ENCODE measurements at regions of chr7 and their contacts with region 1.

Region 1: DNA sequence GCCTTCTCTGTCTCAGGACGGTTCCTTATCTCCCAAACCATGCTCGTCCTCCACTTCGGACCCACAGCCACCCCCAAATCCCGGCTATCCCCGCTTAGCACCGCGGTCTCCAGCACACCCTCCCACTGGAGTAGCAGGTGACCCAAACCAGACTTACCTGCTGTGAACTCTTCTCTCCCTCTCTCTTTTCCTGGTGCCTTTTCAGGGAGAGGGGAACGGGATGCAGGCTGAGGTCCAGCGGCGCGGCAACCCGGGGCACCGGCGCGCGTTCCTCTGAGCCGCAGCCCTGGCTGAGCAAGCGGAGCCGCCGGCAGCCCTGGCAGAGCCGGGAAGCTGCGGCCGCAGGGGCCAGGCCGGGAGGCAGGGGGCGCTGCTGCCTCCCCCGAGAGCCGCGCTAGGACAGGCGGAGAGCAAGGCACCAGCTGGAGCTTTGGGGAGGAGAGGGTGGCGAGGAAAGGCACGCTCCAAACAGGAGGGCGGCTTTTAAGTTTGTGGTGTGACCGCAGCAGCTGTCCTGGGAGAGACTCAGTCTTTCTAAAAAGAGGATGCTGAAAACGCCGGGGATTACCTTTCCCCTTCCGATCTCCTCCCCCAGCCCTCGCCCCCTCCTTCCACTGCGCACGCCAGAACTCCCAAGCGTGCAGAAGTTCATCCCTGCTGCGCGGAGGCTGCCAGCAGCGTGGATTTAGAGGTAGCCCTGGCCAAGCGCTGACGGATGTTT is at the start of gene SEMA3D:
- DNase-seq: peak; percentile 77
- ATAC-seq: peak; percentile 94
- total RNA-seq, gene SEMA3D: 1.6 TPM

Region 2: DNA sequence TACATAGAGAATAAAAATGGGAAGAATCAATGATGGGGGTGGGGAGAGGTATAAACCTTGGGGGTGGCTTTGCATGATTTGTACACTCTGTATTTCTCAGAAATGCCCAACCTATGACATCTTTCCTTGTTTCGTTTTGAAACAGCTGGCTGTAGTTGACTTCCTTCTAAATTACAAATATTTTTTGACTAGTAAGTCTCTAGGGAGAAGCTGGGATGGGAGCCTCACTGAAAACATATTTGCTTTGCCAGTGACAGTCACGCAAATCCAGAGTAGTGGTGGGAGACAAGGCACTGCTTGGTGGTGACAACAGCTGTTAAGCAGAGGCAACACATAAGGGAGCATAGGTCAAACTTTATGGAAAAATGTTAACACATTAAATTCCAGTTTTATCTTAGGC is 440.3 kb before region 1 on chr7:
- intact Hi-C with region 1: no loop called
- DNase-seq: no peak
- ATAC-seq: peak; percentile 52

Region 3: DNA sequence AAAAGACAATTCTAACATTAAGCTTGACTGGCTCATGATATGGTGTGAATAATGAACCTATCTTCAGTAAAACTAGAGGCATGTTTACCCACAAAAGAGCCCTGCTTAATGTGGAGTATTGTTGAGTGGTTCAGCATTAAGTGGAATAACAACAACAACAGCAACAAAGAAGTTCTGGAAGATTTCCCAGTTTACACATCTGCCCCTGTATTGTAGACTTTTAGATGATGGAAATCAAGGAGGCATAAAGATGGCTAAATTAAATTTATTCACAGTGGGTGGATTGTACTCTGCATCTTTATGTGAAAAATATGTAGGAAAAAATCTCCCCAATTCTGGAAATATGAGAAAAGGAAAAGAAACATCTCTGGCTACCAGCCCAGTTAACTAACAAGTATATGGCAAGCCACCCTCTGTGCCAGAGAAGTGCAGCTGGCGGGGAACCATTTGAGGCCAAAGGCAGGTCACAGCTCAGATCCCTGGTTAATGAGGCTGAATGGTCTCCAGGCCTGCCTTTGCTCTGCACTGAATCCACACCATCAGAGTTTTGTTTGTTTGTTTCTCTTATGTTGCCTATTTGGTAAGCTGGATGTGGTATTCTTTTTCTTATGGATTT is 185.8 kb before region 1 on chr7:
- intact Hi-C with region 1: no loop called
- DNase-seq: no peak
- ATAC-seq: no peak

Region 4: GRCh38 chr7:85055906-85056305 is 130.8 kb before region 1 on chr7:
- intact Hi-C with region 1: loop called (anchors 5 kb)
- DNase-seq: no peak
- ATAC-seq: no peak

Region 5: GRCh38 chr7:85081392-85081791 is 105.3 kb before region 1 on chr7:
- intact Hi-C with region 1: no loop called
- DNase-seq: no peak
- ATAC-seq: no peak

Region 6: GRCh38 chr7:85104432-85105205 is 82.1 kb before region 1 on chr7:
- intact Hi-C with region 1: no loop called
- DNase-seq: no peak
- ATAC-seq: peak; percentile 31

Measured in Right ventricle myocardium inferior (tissue), 1 donor.